HEK293 (cell line): ENCODE measurements at regions of chr2 and their contacts with region 1.

Region 1: GRCh38 chr2:108583903-108584520 is 49.7 kb downstream of the LIMS1 start:
- H3K4me3 ChIP-seq: no peak overlapping the region
- H3K27ac ChIP-seq: no peak overlapping the region
- H3K4me1 ChIP-seq: peaks cover 10% of the 10 kb centered on the region; the same call in 1 of the 2 replicates
- CTCF ChIP-seq: peak; percentile 81

Region 2: DNA sequence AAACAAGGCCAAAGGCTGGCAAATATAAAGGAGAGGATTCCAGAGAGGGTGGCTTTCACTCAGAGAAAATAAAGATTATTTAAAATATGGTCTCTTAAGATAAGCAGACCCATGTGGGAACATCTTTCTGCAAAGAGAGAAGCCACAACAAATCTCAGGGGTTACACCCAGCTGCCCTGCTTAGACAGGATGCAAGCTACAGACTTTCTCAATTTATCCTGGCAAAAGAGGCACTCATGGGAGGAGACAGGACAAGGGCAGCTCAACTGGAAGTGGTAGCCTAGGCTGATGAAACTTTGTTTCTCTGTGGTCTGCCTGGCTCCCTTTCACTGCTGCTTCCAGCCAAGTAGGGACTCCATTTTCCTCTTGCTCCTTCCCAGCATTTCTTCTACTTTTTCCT is 232.1 kb before region 1 on chr2:
- CTCF ChIA-PET with region 1: interaction called, 25 read pairs
- POLR2A ChIA-PET with region 1: no interaction called
- H3K4me3 ChIP-seq: no peak overlapping the region
- H3K27ac ChIP-seq: no peak overlapping the region
- H3K4me1 ChIP-seq: no peaks in the 10 kb centered on the region
- CTCF ChIP-seq: no peak

Region 3: DNA sequence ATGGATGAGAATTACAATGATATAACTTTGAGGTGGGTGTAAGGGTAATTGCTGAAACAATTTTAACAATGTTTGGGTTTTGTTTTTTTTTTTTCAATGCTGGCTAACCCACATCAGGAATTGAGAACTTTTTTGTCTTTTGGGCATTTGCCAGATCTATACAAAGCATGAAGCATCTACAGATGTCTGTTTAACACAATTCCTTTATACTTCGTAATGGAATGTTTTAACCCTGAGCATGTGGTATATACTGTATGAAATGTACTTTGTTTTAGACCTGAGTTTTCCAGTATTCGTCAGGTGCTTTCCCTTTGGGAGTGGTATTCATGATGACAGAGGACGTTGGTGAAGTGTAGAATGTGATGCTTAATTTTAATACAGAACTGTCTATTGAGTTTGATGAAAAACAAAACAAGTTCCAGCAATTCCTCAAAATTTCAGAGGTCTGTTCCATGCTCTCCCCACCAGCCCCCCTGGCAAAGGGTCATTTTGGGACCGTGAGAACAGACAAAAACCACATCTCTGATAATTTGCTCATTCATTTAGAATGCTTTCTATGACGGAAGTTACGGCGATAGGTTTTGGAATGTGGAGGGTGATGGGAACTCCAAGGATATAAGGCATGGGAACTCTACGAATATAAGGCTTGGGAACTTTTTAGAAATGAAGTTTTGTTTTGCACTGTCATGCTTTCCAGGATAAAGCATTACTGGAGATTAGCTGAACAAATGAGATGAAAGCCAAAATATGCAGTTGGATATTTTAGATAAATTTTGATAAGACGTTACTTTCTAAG is 35.6 kb before region 1 on chr2:
- CTCF ChIA-PET with region 1: no interaction called
- POLR2A ChIA-PET with region 1: no interaction called
- H3K4me3 ChIP-seq: no peak overlapping the region
- H3K27ac ChIP-seq: no peak overlapping the region
- H3K4me1 ChIP-seq: peaks cover 9% of the 10 kb centered on the region; the same call in 1 of the 2 replicates
- CTCF ChIP-seq: no peak

Region 4: DNA sequence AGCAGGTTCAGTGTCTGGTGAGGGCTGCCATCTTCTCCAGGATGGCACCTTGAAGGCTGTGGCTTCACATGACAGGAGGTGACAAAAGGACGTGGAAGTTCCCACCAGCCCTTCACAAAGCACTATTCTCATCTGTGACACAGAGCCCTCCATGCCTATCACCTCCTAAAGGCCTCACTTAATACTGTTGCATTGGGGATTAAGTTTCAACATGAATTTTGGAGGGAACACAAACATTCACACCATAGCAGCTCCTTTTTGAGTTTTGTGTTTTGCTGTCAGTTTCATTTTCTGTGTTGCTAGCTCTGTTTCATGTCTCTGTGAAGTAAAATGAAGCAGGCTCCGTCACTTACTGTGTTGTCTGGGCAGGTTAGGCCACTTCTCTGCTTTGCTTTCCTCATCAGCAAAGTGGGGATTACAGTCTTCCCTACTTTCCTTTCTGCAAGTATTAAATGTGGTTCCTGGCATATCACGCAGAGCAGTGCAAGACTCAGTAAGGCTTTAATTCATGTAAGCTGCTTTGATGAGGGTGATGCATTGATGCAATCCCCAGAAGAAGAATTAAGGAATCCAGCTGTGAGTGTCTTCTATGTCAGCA is 18.1 kb before region 1 on chr2:
- CTCF ChIA-PET with region 1: interaction called, 10 read pairs
- POLR2A ChIA-PET with region 1: no interaction called
- H3K4me3 ChIP-seq: no peak overlapping the region
- H3K27ac ChIP-seq: no peak overlapping the region
- H3K4me1 ChIP-seq: 0 out of 2 replicates have a peak, but pooled peaks cover 3% of the 10 kb centered on the region
- CTCF ChIP-seq: no peak

Region 5: DNA sequence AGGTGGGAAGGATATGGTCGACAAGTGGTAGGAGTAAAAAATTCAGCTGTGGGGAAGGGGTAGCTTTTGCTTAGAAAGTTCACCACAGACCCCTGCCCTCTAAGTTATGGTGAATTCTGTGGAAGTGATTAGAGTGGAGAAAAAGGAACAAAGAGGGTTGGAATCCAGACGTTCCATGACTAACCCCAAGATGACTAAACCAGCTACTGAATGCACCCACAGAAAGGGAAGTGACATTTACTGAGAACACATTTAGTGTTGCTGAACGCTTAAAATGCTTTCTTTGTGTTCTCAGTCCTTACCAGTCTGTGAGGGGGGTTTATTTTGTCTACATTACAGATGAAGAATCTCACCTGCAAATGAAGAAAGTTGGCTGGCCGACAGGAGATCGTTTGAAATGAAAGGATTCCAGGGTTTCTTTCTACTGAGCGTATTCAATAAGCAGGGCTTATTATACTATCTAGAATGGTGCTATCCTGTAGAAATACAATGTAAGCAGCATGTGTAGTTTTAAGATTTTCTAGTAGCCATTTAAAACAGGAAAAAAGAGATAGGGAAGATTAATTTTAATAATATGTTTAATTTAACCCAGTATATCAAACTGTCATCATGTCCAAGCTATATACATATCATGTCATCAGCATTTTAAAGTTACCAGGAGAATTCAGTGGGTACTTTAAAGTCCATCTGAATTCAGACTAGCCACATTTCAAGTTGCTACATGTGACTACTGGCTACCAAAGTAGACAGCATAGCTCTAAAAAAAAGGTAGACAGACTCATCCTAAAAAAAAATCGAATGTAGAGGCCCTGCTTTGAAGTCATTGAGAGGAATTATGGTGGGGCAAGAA is 10.3 kb after region 1 on chr2:
- CTCF ChIA-PET with region 1: interaction called, 25 read pairs
- POLR2A ChIA-PET with region 1: no interaction called
- H3K4me3 ChIP-seq: no peak overlapping the region
- H3K27ac ChIP-seq: no peak overlapping the region
- H3K4me1 ChIP-seq: peaks cover 18% of the 10 kb centered on the region
- CTCF ChIP-seq: no peak

Region 6: GRCh38 chr2:108823281-108823680 is 239.3 kb after region 1 on chr2:
- CTCF ChIA-PET with region 1: no interaction called
- POLR2A ChIA-PET with region 1: no interaction called
- H3K4me3 ChIP-seq: no peak overlapping the region
- H3K27ac ChIP-seq: no peak overlapping the region
- H3K4me1 ChIP-seq: no peaks in the 10 kb centered on the region
- CTCF ChIP-seq: no peak